ENCODE measurements at regions of chr12 and their contacts with region 1.

Region 1: DNA sequence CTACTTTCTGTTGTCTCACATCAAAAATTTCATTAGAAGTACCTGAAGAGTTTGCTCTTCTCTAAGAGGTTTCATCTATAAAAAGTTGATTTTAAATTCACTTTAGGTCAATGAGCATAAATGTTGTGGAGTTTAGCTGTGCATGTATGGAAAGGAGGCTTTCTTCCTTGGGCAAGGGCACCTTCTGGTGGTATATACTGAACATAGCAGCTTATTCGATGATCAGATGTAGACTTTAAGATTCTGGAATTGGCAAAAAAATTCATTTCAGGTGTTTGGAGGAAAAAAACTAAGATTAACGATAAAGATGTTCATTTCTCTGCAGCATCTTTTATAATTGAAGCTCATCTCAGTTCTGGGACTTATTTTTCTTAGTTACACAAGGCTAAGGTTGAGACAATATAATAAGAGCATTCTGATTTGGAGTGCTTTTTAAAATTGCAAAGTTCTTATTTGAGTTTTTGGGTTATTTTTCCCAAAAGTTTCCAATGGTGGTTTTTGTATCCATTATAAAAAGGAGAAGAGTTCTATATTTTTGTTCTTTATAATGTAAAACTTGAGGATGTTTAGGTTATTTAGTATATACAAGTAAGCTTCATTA is 46.8 kb downstream of the TMEM117 start:
- DNase-seq: peak; percentile 12
- H3K4me3 ChIP-seq: no peak overlapping the region
- H3K27ac ChIP-seq: no peak overlapping the region
- H3K4me1 ChIP-seq: peaks cover 0 to 6% (median 0%) of the 10 kb centered on the region in 4 donors
- H3K27me3 ChIP-seq: no peaks in the 10 kb centered on the region
- CTCF ChIP-seq: peak; percentile 74 to 81 (median 77)
- EP300 ChIP-seq: no peak
- POLR2A ChIP-seq: no peak

Region 2: GRCh38 chr12:43444940-43445564 is 437.6 kb before region 1 on chr12:
- in situ Hi-C with region 1: loop called in 2 of 4 experiments (anchors 25 kb)
- intact Hi-C with region 1: no loop called
- DNase-seq: peak; percentile 17
- H3K4me3 ChIP-seq: no peak overlapping the region
- H3K27ac ChIP-seq: no peak overlapping the region
- H3K4me1 ChIP-seq: no peaks in the 10 kb centered on the region
- H3K27me3 ChIP-seq: no peaks in the 10 kb centered on the region
- CTCF ChIP-seq: peak; percentile 31 to 71 (median 40)
- EP300 ChIP-seq: no peak
- POLR2A ChIP-seq: no peak

Region 3: GRCh38 chr12:43453761-43454160 is 428.9 kb before region 1 on chr12:
- in situ Hi-C with region 1: loop called in 2 of 4 experiments (anchors 25 kb)
- intact Hi-C with region 1: no loop called
- DNase-seq: no peak
- H3K4me3 ChIP-seq: no peak overlapping the region
- H3K27ac ChIP-seq: no peak overlapping the region
- H3K4me1 ChIP-seq: no peaks in the 10 kb centered on the region
- H3K27me3 ChIP-seq: no peaks in the 10 kb centered on the region
- CTCF ChIP-seq: no peak
- EP300 ChIP-seq: no peak
- POLR2A ChIP-seq: no peak

Region 4: DNA sequence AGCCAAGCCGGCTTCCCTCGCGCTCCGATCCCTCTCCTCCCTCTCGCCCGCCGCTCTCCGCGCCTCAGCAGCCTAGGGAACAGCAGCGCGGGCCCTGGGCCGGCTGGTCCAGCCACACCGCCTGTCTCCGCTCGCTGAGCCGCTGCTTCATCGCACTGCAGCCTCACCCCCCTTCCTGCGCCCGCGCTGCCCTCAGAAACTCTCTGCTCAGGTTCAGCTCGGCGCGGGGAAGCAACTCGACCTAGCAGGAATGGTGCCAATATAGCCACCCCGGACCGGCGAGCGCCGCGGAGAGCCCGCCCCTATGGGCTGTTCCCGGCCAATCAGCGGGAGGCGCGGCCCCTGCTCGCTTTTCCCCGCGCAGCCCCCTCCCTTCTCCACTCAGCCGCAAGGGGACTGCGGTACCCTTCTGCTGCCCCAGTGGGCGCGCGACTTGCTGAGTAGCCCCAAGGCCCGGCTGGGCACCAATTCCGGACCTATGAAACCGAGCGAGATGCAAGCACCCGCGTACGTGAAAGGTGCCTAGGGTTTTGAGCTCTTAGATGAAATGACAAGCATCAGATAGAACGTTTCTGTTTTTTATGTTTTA is 330.6 kb before region 1 on chr12 and contains the start of gene ADAMTS20:
- in situ Hi-C with region 1: no loop called
- intact Hi-C with region 1: no loop called
- DNase-seq: no peak
- H3K4me3 ChIP-seq: no peak within 1 kb of the TSS
- H3K27ac ChIP-seq: no peak within 1 kb of the TSS
- H3K4me1 ChIP-seq: no peaks in the 10 kb centered on the region
- H3K27me3 ChIP-seq: peaks cover 31% of the 10 kb centered on the region
- CTCF ChIP-seq: no peak
- EP300 ChIP-seq: no peak
- POLR2A ChIP-seq: no peak
- total RNA-seq, gene ADAMTS20: not detected

Region 5: GRCh38 chr12:43776498-43776897 is 106.2 kb before region 1 on chr12:
- in situ Hi-C with region 1: loop called in 2 of 4 experiments (anchors 10 kb)
- intact Hi-C with region 1: no loop called
- DNase-seq: no peak
- H3K4me3 ChIP-seq: no peak overlapping the region
- H3K27ac ChIP-seq: no peak overlapping the region
- H3K4me1 ChIP-seq: no peaks in the 10 kb centered on the region
- H3K27me3 ChIP-seq: no peaks in the 10 kb centered on the region
- CTCF ChIP-seq: no peak
- EP300 ChIP-seq: no peak
- POLR2A ChIP-seq: no peak

Measured in transverse colon (tissue), 4 donors.